Activated CD4-positive, alpha-beta memory T cell treated with anti-CD3 and anti-CD28 coated beads for 36 hours (primary cell): ENCODE measurements at regions of chr1 and their contacts with region 1.

Region 1: DNA sequence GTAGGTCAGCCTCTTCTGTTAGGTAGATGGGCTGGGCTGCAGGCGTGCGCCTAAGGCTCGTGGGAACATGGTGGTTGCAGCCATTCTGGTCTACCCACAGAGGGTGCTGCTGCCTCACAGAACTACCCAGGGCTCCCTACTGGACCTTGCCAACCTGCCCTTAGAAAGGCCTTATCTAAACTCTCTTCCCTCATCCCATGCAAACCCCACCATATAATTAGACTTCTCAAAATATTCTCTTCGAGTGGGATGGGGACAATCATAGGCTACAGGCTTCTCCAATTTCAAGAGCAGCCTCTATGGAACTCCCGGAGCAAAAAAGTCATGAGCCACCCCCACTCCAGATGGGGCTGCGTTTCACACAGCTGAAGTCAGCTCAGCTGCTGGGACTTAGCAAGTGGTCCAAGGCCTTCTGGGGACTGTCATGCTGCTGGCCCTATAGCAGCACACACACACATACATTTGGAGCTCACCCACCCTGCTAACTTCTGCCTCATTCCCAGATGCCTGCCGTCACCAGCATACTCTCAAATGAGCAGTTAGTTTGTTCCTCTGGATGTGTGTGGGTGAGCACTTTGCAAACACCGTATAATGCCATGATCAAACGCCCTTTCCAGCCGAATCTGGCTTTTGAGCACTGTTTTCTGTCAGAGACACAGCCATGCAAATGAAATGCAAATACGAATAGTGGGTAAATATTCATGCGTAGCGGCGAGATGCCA is 6.1 kb upstream of the SDHB start:
- DNase-seq: peak; percentile 57
- H3K4me3 Mint-ChIP-seq: no peak overlapping the region
- H3K27ac Mint-ChIP-seq: no peak overlapping the region
- H3K4me1 Mint-ChIP-seq: no peaks in the 10 kb centered on the region
- H3K27me3 Mint-ChIP-seq: no peaks in the 10 kb centered on the region

Region 2: DNA sequence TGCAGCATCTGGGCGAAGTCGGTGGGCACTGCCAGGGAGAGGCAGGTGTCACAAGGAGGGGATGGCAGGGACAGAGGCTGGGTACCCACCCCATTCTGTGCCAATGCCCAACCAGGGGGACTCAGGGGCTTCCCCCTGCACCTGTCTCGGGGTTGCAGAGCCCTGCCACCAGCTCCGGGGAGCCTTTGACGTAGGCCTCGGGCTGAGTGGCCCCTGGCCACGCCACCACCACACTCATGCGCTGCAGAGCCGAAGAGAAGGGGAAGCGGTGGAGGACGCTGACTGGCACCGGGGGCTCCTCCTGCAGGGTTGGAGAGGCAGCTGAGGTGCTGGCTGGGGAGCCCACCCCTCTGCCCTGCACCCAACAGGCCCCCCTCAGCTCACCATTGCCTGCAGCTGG is 67.8 kb before region 1 on chr1:
- CTCF ChIA-PET with region 1: no interaction called
- POLR2A ChIA-PET with region 1: no interaction called
- intact Hi-C with region 1: no loop called
- DNase-seq: no peak
- H3K4me3 Mint-ChIP-seq: no peak overlapping the region
- H3K27ac Mint-ChIP-seq: no peak overlapping the region
- H3K4me1 Mint-ChIP-seq: no peaks in the 10 kb centered on the region
- H3K27me3 Mint-ChIP-seq: no peaks in the 10 kb centered on the region

Region 3: GRCh38 chr1:17075470-17076255 is 15.8 kb after region 1 on chr1:
- CTCF ChIA-PET with region 1: interaction called, 12 read pairs
- POLR2A ChIA-PET with region 1: no interaction called
- intact Hi-C with region 1: no loop called
- DNase-seq: peak; percentile 22
- H3K4me3 Mint-ChIP-seq: no peak overlapping the region
- H3K27ac Mint-ChIP-seq: no peak overlapping the region
- H3K4me1 Mint-ChIP-seq: no peaks in the 10 kb centered on the region
- H3K27me3 Mint-ChIP-seq: no peaks in the 10 kb centered on the region